A549 (cell line): ENCODE measurements at regions of chr15 and their contacts with region 1.

Region 1: GRCh38 chr15:101258238-101259144 is 6.6 kb upstream of the CHSY1 start:
- DNase-seq: peak; percentile 61 to 79
- ATAC-seq: peak; percentile 78 to 88
- H3K4me3 ChIP-seq: no peak overlapping the region
- H3K27ac ChIP-seq: no peak overlapping the region
- H3K4me1 ChIP-seq: 0 out of 3 replicates have a peak, but pooled peaks cover 3% of the 10 kb centered on the region
- CTCF ChIP-seq: peak; percentile 99
- EP300 ChIP-seq: no peak
- POLR2A ChIP-seq: no peak
- RAD21 ChIP-seq: peak; percentile 99 to 100

Region 2: DNA sequence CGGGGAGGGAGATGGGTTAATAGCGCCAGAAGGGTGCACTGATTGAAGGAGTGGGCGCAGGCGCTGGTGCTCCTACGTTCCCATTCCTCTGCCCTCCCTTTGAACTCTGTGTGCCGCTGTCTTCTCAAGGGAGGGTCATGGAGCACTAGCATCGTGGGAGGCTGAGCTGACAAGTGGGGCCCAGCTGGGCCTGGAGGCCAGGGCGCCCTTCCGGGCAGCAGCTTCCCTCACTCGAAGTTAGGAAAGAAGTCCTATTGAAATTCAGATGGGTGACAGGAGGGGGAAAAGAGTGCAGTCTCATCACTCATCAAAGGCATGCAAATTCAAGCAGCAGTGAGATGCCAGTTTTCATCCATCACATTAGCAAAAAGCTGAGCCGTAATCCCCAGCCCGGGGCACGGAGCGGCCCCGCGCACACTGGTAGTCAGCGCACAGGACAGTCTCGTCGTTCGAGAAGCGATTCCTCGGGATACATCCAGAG is 211.2 kb before region 1 on chr15:
- CTCF ChIA-PET with region 1: interaction called, 12 read pairs
- POLR2A ChIA-PET with region 1: no interaction called
- DNase-seq: no peak
- ATAC-seq: no peak
- H3K4me3 ChIP-seq: no peak overlapping the region
- H3K27ac ChIP-seq: no peak overlapping the region
- H3K4me1 ChIP-seq: no peaks in the 10 kb centered on the region
- CTCF ChIP-seq: no peak
- EP300 ChIP-seq: no peak
- POLR2A ChIP-seq: no peak
- RAD21 ChIP-seq: no peak

Region 3: GRCh38 chr15:101099183-101099582 is 159.3 kb before region 1 on chr15:
- CTCF ChIA-PET with region 1: interaction called, 275 read pairs
- POLR2A ChIA-PET with region 1: no interaction called
- DNase-seq: no peak
- ATAC-seq: no peak
- H3K4me3 ChIP-seq: no peak overlapping the region
- H3K27ac ChIP-seq: no peak overlapping the region
- H3K4me1 ChIP-seq: no peaks in the 10 kb centered on the region
- CTCF ChIP-seq: no peak
- EP300 ChIP-seq: no peak
- POLR2A ChIP-seq: no peak
- RAD21 ChIP-seq: no peak

Region 4: DNA sequence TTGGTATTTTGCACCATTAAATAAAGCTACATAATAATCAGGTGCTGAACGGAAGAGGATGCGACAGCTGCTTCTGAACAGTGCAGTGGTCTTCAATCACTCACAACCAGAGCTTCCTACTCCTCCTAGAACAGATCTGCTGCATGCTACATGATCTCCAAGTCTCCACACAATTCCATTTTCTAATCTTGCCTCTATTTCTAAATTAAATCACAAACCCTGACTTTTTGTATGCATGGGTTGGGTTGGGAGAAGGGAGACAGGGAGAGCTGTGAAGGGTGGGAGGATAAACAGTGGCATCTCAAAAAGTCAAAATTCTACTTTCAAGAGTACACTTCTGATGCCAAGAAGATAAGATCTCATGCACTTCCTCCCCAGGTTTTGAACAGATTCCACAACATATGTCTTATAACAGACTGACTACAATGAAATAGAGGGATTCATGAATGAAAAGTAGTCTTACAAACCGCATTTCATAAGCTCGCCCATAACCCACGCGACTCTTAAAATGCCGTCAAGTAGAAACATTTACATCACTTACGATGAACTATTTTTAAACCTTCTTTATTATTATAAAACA is 63.9 kb before region 1 on chr15:
- CTCF ChIA-PET with region 1: interaction called, 10 read pairs
- POLR2A ChIA-PET with region 1: interaction called, 6 read pairs
- DNase-seq: no peak
- ATAC-seq: no peak
- H3K4me3 ChIP-seq: no peak overlapping the region
- H3K27ac ChIP-seq: no peak overlapping the region
- H3K4me1 ChIP-seq: peaks cover 31% of the 10 kb centered on the region
- CTCF ChIP-seq: no peak
- EP300 ChIP-seq: no peak
- POLR2A ChIP-seq: no peak
- RAD21 ChIP-seq: no peak

Region 5: DNA sequence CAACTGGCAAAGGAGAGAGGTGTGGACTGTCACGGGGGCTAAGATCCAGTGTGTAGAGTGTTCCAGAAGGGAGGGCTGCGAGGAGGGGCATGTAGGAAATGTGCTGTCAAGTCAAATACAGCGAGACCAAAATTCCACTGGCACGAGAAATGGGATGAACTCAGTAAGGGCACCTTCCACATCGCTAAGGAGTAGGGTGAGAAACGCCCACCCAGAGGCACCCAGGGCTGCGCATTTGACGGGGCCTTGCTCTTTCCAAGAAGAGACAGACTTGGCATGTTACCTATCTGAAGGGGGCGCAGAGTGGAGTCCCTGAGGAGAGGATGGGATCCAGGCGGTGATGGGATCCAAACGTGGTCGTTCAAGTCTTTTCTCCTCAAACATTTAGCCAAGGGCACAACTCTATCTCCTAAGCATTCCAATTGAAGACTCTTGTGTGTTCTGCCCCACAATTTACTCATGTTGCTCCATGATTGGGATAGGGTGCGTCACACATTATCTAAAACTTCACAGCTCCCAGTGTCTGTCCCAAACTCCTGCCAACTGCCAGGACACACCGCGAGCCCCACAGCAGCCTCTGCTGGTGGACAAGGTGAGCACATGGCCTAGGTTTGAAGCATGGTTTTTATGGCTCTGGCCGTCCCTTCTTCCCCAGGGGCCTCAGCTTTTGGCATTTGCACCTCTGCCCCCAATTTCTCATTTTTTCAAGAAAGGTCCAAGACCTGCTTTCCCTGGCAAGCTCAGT is 11.2 kb after region 1 on chr15:
- CTCF ChIA-PET with region 1: interaction called, 66 read pairs
- POLR2A ChIA-PET with region 1: interaction called, 3 read pairs
- DNase-seq: peak in 1 of 2 experiments; percentile 53
- ATAC-seq: peak; percentile 55 to 74; a peak in 5 of 6 replicates
- H3K4me3 ChIP-seq: no peak overlapping the region
- H3K27ac ChIP-seq: no peak overlapping the region
- H3K4me1 ChIP-seq: no peaks in the 10 kb centered on the region
- CTCF ChIP-seq: peak; percentile 35
- EP300 ChIP-seq: no peak
- POLR2A ChIP-seq: no peak
- RAD21 ChIP-seq: peak in 1 of 2 experiments; percentile 15; a peak in 1 of 5 replicates